Ascending aorta (tissue), 2 donors: ENCODE measurements at regions of chrX and their contacts with region 1.

Region 1: DNA sequence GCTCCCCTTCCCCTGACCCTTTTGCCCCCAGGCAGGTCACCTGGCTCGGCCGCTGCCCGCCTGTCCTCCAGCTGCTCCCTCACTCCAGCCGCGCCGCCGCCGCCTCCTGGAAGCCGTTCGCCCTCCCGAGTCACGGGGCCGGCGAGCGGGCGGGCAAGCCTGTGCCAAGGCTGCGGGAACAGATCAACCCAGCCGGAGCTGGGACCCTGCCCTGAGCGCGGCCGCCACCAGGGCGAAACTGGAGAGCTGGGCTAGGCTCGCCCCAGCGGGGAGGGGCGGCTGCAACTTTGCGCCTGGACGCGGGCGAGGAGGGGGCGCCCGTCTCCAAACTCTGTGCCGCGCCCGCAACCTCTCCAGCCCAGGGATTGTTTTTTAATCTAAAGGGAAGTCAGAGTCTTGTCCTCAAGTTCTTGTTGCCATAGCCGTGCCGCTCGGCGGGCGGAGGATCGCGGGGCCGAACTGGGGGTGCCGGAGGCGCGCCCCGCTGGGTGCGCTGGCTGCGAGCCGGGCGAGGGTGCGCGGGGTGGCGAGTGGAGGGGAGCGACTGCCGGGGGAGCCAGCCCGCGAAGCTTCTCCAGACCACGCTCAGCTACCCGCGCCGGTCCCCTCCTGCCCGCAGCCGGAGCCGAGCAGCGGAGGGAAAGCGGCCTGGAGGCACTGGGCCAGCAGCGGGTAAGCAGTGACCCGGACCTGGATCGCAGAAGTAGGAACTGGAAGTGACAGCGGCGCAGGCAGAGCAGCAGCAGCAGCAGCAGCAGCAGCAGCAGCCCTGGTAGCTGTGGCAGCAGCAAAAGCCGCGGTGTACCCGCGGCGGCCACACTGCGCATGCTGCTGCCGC is 13.4 kb downstream of the ARHGEF6 start:
- DNase-seq: peak in 1 of 2 donors; percentile 81
- H3K4me3 ChIP-seq: peak overlapping the region; percentile 59 to 70
- H3K27ac ChIP-seq: peak overlapping the region; percentile 85 to 90
- H3K4me1 ChIP-seq: no peaks in the 10 kb centered on the region
- H3K27me3 ChIP-seq: no peaks in the 10 kb centered on the region
- CTCF ChIP-seq: peak in 2 of 3 experiments; percentile 4 to 38

Region 2: GRCh38 chrX:136353519-136354095 is 413.7 kb before region 1 on chrX:
- intact Hi-C with region 1: no loop called
- DNase-seq: no peak
- H3K4me3 ChIP-seq: no peak overlapping the region
- H3K27ac ChIP-seq: no peak overlapping the region
- H3K4me1 ChIP-seq: no peaks in the 10 kb centered on the region
- H3K27me3 ChIP-seq: no peaks in the 10 kb centered on the region
- CTCF ChIP-seq: no peak

Region 3: DNA sequence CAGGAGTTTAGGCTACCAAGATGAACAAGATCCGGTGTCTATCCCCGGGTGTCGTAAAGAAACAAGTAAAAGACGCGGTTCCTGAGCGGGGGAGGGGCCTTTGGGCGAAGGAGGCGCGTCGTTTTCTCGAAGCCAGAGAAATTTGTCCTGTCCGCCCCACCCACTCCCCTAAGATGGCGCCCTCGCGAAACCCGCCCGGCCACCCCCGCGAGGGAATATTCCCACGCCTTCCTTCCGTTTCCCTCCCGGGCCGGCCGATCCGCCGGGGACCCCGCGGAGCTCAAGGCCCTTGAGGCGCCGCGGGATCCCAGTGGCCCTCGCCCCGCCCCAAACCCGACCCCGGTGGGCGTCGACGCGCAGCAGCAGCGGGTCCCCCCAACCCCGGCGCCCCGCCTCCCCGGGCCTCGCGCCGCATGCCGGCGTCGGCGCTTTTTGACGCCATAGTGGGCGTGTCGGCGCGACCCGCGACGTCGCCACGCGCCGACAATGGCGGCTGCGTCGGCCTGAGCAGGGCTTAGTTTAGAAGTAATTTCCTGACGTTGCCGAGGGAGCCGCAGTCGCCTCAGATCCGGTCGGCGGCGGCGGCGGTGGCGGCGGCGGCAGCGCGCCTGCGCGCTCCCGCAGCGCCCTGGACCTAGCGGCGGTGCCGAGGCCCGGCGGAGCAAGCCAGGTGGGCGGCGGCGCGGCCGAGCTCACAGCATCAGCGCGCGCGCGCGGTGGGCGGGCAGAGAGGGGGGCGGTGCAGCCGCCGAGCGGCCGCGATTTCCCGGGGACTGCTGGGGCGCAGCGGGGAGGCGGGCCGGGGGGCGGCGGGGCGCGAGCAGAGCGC is 270.3 kb before region 1 on chrX and contains the start of gene HTATSF1:
- intact Hi-C with region 1: loop called (anchors 10 kb)
- DNase-seq: peak; percentile 49 to 93
- H3K4me3 ChIP-seq: peak within 1 kb of the TSS; percentile 58 to 75
- H3K27ac ChIP-seq: peak within 1 kb of the TSS; percentile 86 to 93
- H3K4me1 ChIP-seq: no peaks in the 10 kb centered on the region
- H3K27me3 ChIP-seq: peaks cover 3% of the 10 kb centered on the region
- CTCF ChIP-seq: peak in 1 of 3 experiments; percentile 3
- total RNA-seq, gene HTATSF1: 3.7 TPM

Region 4: GRCh38 chrX:136711147-136711546 is 56.2 kb before region 1 on chrX:
- intact Hi-C with region 1: loop called (anchors 5 kb)
- DNase-seq: no peak
- H3K4me3 ChIP-seq: no peak overlapping the region
- H3K27ac ChIP-seq: no peak overlapping the region
- H3K4me1 ChIP-seq: no peaks in the 10 kb centered on the region
- H3K27me3 ChIP-seq: no peaks in the 10 kb centered on the region
- CTCF ChIP-seq: peak in 2 of 3 experiments; percentile 36 to 55

Region 5: DNA sequence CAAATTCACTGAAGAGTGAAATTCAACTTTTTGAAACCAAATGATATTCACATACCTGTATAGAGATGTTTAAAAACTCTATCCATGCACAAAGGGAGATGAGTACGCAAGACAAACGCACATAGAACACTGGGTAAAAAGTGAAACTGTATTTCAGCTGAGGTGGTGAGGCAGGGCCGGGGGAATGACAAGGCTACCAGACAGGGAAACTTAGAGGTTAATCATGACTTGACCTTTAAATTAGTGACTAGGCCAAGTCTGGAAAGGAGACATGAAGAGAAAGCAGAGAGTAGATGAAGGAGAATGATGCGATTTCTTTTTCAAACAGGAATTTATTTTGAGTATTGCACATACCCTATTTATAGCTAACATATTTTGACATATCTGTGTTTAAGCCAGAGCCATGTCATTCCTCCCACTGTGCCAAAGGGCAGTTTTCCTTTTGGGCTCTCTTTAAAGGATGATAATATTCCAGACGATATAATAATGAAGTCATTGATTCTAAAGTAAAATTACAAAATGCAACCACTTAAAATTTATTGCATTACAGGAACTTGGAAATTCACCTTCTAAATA is 36.0 kb before region 1 on chrX:
- intact Hi-C with region 1: loop called (anchors 5 kb)
- DNase-seq: no peak
- H3K4me3 ChIP-seq: no peak overlapping the region
- H3K27ac ChIP-seq: peak overlapping the region; percentile 37 to 53
- H3K4me1 ChIP-seq: peaks cover 0 to 1% of the 10 kb centered on the region in 2 donors
- H3K27me3 ChIP-seq: no peaks in the 10 kb centered on the region
- CTCF ChIP-seq: no peak

Region 6: DNA sequence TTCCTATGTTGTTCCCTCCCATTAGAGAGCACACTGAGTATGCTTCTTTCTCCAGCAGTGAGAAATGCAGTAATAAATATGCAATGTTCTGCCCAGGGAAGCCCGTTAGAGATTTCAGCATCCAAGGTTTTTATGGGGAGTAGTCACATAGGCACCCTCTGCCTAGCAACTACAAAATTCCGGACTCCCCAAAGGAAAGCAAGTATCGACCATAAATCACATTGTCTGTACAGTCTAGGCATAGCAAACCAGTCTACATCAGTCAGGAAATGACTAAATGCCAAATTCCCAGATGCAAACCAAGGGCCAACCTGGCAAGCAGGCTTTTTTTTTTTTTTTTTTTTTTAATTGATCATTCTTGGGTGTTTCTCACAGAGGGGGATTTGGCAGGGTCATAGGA is 231.7 kb after region 1 on chrX:
- intact Hi-C with region 1: no loop called
- DNase-seq: no peak
- H3K4me3 ChIP-seq: no peak overlapping the region
- H3K27ac ChIP-seq: no peak overlapping the region
- H3K4me1 ChIP-seq: no peaks in the 10 kb centered on the region
- H3K27me3 ChIP-seq: no peaks in the 10 kb centered on the region
- CTCF ChIP-seq: no peak